WTC11 (cell line): ENCODE measurements at regions of chr15 and their contacts with region 1.

Region 1: DNA sequence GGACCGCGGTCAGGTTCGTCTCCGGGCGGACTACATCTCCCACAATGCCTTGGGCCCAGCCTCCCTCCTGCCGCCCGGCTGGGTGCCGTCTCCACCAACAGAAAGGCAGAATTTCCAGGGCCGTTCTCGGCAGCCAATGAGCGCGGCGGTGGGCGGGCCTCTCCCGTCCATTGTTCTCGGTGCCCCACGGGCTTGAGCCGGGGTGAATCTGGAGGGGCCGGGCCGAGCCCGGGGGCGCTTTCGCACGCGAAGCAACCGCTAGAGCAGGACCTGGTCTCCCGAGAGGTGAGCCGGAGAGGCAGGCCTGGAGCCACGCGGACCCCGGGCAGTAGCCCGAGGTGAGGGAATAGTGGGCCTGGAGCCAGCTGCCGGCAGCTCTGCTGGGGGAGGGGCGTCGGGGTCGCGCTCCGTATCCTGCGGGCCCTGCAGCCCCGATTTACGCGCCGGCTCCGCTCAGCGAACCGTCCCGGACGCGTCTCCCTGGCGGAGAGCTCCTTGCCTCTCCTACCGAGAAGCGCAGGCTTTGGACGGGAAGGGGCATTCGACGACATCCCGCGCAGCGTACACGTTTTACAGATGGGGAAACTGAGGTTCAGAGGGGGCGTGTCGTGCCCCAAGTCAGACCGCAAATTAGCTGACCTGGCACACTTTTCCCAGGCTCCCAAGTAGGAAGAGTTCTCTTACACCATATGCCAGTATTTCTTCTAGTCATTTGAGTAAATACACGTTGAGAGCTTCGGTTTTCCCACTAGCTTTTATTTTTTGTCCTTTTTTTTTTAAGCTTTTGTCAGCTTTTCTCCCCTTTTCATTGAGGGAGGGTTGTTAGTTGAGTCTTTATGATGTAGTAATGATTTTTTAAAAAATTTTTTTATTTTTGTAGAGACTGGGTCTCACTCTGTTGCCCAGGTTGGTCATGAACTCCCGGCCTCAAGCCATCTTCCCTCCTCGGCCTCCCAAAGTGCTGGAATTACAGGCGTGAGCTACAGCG is at the start of gene ZSCAN2:
- DNase-seq: peak; percentile 98
- ATAC-seq: peak; percentile 83
- H3K4me3 Mint-ChIP-seq: peak within 1 kb of the TSS; percentile 87
- H3K27ac Mint-ChIP-seq: peak within 1 kb of the TSS; percentile 78
- H3K4me1 Mint-ChIP-seq: peaks cover 48% of the 10 kb centered on the region
- H3K27me3 Mint-ChIP-seq: no peaks in the 10 kb centered on the region
- CTCF ChIP-seq: no peak
- total RNA-seq, gene ZSCAN2: 39.6 to 51.9 TPM (median 44.4 TPM) in 3 replicates

Region 2: GRCh38 chr15:84402856-84403608 is 198.1 kb before region 1 on chr15:
- CTCF ChIA-PET with region 1: no interaction called
- POLR2A ChIA-PET with region 1: no interaction called
- DNase-seq: no peak
- ATAC-seq: no peak
- H3K4me3 Mint-ChIP-seq: no peak overlapping the region
- H3K27ac Mint-ChIP-seq: no peak overlapping the region
- H3K4me1 Mint-ChIP-seq: no peaks in the 10 kb centered on the region
- H3K27me3 Mint-ChIP-seq: no peaks in the 10 kb centered on the region
- CTCF ChIP-seq: no peak

Region 3: GRCh38 chr15:84552896-84553295 is 48.2 kb before region 1 on chr15:
- CTCF ChIA-PET with region 1: no interaction called
- POLR2A ChIA-PET with region 1: no interaction called
- DNase-seq: no peak
- ATAC-seq: no peak
- H3K4me3 Mint-ChIP-seq: no peak overlapping the region
- H3K27ac Mint-ChIP-seq: no peak overlapping the region
- H3K4me1 Mint-ChIP-seq: peaks cover 15% of the 10 kb centered on the region
- H3K27me3 Mint-ChIP-seq: no peaks in the 10 kb centered on the region
- CTCF ChIP-seq: no peak

Region 4: DNA sequence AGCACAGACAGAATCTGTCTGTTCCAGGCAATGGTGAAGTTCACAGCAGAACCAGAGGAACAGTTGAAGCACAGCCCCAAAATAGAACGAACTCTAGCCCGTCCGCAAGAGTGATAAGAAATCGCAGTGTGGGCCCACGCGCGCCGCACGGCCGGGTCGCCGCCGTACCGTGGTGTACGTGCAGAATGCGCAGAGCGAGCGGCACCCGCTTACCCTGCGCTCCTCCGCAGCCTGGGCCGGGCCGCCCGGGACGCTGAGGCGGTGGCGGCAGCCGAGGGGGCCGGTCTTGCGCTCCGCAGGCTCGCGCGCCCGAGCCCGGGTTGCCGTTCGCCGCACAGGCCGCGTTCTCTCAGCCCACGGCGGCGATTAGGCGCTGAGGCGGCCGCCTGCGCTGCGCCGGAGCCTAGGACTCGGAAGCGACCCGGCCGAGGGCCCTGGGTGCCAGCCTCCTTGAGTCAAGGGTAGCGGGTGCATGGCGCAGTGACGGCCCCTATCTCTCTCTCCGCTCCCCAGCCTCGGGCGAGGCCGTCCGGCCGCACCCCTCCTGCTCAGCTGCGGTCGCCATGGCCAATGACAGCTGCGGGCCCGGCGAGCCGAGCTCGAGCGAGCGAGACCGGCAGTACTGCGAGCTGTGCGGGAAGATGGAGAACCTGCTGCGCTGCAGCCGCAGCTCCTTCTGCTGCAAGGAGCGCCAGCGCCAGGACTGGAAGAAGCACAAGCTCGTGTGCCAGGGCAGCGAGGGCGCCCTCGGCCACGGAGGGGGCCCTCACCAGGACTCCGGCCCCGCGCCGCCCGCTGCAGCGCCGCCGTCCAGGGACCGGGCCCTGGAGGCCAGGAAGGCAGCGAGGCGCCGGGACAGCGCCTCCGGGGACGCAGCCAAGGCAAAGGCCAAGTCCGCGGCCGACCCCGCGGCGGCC is 32.4 kb after region 1 on chr15:
- CTCF ChIA-PET with region 1: interaction called, 139 read pairs
- POLR2A ChIA-PET with region 1: interaction called, 14 read pairs
- DNase-seq: peak; percentile 68
- ATAC-seq: peak; percentile 51
- H3K4me3 Mint-ChIP-seq: peak overlapping the region; percentile 90
- H3K27ac Mint-ChIP-seq: peak overlapping the region; percentile 52; the same call in 1 of the 2 replicates
- H3K4me1 Mint-ChIP-seq: peaks cover 52% of the 10 kb centered on the region
- H3K27me3 Mint-ChIP-seq: peaks cover 16% of the 10 kb centered on the region
- CTCF ChIP-seq: no peak